HepG2 (cell line): ENCODE measurements at regions of chr17 and their contacts with region 1.

Region 1: GRCh38 chr17:42002792-42003301 is 14.4 kb downstream of the DNAJC7 start:
- DNase-seq: peak; percentile 93
- ATAC-seq: peak; percentile 84
- H3K4me3 ChIP-seq: peak overlapping the region in 1 of 3 experiments; percentile 35; a peak in 1 of 6 replicates
- H3K27ac ChIP-seq: peak overlapping the region; percentile 77
- H3K4me1 ChIP-seq: peaks cover 42% of the 10 kb centered on the region
- H3K27me3 ChIP-seq: no peaks in the 10 kb centered on the region
- CTCF ChIP-seq: no peak
- EP300 ChIP-seq: peak in 1 of 2 experiments; percentile 39; a peak in 1 of 4 replicates
- POLR2A ChIP-seq: no peak
- RAD21 ChIP-seq: no peak

Region 2: GRCh38 chr17:41824086-41824485 is 178.8 kb before region 1 on chr17:
- CTCF ChIA-PET with region 1: no interaction called
- POLR2A ChIA-PET with region 1: no interaction called
- in situ Hi-C with region 1: no loop called
- intact Hi-C with region 1: no loop called
- DNase-seq: no peak
- ATAC-seq: no peak
- H3K4me3 ChIP-seq: no peak overlapping the region
- H3K27ac ChIP-seq: no peak overlapping the region
- H3K4me1 ChIP-seq: peaks cover 37% of the 10 kb centered on the region
- H3K27me3 ChIP-seq: no peaks in the 10 kb centered on the region
- CTCF ChIP-seq: no peak
- EP300 ChIP-seq: no peak
- POLR2A ChIP-seq: no peak
- RAD21 ChIP-seq: no peak

Region 3: GRCh38 chr17:41972571-41973411 is 30.1 kb before region 1 on chr17:
- CTCF ChIA-PET with region 1: no interaction called
- POLR2A ChIA-PET with region 1: interaction called, 50 read pairs
- in situ Hi-C with region 1: no loop called
- intact Hi-C with region 1: no loop called
- DNase-seq: no peak
- ATAC-seq: peak; percentile 2
- H3K4me3 ChIP-seq: no peak overlapping the region
- H3K27ac ChIP-seq: no peak overlapping the region
- H3K4me1 ChIP-seq: peaks cover 38% of the 10 kb centered on the region
- H3K27me3 ChIP-seq: no peaks in the 10 kb centered on the region
- CTCF ChIP-seq: no peak
- EP300 ChIP-seq: no peak
- POLR2A ChIP-seq: peak; percentile 18 to 41; a peak in 2 of 4 replicates
- RAD21 ChIP-seq: no peak

Region 4: GRCh38 chr17:41989702-41990419 is 13.0 kb before region 1 on chr17:
- CTCF ChIA-PET with region 1: no interaction called
- POLR2A ChIA-PET with region 1: interaction called, 27 read pairs
- in situ Hi-C with region 1: no loop called
- intact Hi-C with region 1: no loop called
- DNase-seq: peak; percentile 94
- ATAC-seq: peak; percentile 97
- H3K4me3 ChIP-seq: no peak overlapping the region
- H3K27ac ChIP-seq: peak overlapping the region; percentile 57
- H3K4me1 ChIP-seq: peaks cover 36% of the 10 kb centered on the region
- H3K27me3 ChIP-seq: no peaks in the 10 kb centered on the region
- CTCF ChIP-seq: peak; percentile 33
- EP300 ChIP-seq: peak in 1 of 2 experiments; percentile 73; a peak in 2 of 4 replicates
- POLR2A ChIP-seq: no peak
- RAD21 ChIP-seq: peak; percentile 35; the same call in 1 of the 2 replicates

Region 5: GRCh38 chr17:42078396-42079043 is 75.7 kb after region 1 on chr17:
- CTCF ChIA-PET with region 1: no interaction called
- POLR2A ChIA-PET with region 1: no interaction called
- in situ Hi-C with region 1: no loop called
- intact Hi-C with region 1: no loop called
- DNase-seq: no peak
- ATAC-seq: no peak
- H3K4me3 ChIP-seq: no peak overlapping the region
- H3K27ac ChIP-seq: no peak overlapping the region
- H3K4me1 ChIP-seq: peaks cover 71% of the 10 kb centered on the region
- H3K27me3 ChIP-seq: peaks cover 0 to 5% of the 10 kb centered on the region in 2 experiments; a peak in 1 of 5 replicates
- CTCF ChIP-seq: peak; percentile 59
- EP300 ChIP-seq: no peak
- POLR2A ChIP-seq: no peak
- RAD21 ChIP-seq: no peak